ENCODE measurements at regions of chr2 and their contacts with region 1.

Region 1: GRCh38 chr2:85354286-85355072 is at the starts of genes ELMOD3 and RETSAT:
- DNase-seq: peak; percentile 93 to 100
- ATAC-seq: peak; percentile 97 to 99 (median 98)
- H3K4me3 ChIP-seq: peak within 1 kb of the TSS; percentile 52 to 87 (median 68)
- H3K27ac ChIP-seq: peak within 1 kb of the TSS; percentile 38 to 92 (median 90)
- H3K4me1 ChIP-seq: peaks cover 0 to 46% (median 22%) of the 10 kb centered on the region in 9 donors
- H3K27me3 ChIP-seq: no peaks in the 10 kb centered on the region
- CTCF ChIP-seq: peak in 2 of 9 donors; percentile 8 to 13
- total RNA-seq, gene ELMOD3: 7.3 to 12.5 (median 8.8) TPM
- total RNA-seq, gene RETSAT: 27.9 to 87.4 (median 35.6) TPM

Region 2: GRCh38 chr2:85148182-85148581 is 206.3 kb before region 1 on chr2:
- intact Hi-C with region 1: no loop called
- DNase-seq: no peak
- ATAC-seq: peak in 1 of 8 donors; percentile 27
- H3K4me3 ChIP-seq: no peak overlapping the region
- H3K27ac ChIP-seq: no peak overlapping the region
- H3K4me1 ChIP-seq: peaks cover 0 to 25% (median 12%) of the 10 kb centered on the region in 9 donors
- H3K27me3 ChIP-seq: no peaks in the 10 kb centered on the region
- CTCF ChIP-seq: no peak

Region 3: GRCh38 chr2:85327822-85328617 is 26.5 kb before region 1 on chr2 and contains the start of gene TGOLN2:
- intact Hi-C with region 1: loop called in 1 of 10 experiments (anchors 1 kb)
- DNase-seq: peak; percentile 94 to 95
- ATAC-seq: peak; percentile 98 to 99 (median 98)
- H3K4me3 ChIP-seq: peak within 1 kb of the TSS; percentile 57 to 90 (median 70)
- H3K27ac ChIP-seq: peak within 1 kb of the TSS; percentile 93 to 99 (median 97)
- H3K4me1 ChIP-seq: peaks cover 14 to 52% (median 43%) of the 10 kb centered on the region in 9 donors
- H3K27me3 ChIP-seq: no peaks in the 10 kb centered on the region
- CTCF ChIP-seq: peak in 3 of 9 donors; percentile 23 to 36 (median 29)
- total RNA-seq, gene TGOLN2: 66.2 to 99.9 (median 78.4) TPM